ENCODE measurements at regions of chrX and their contacts with region 1.

Region 1: GRCh38 chrX:135295238-135295943 is 13.9 kb upstream of the ETDC start:
- DNase-seq: peak in 2 of 5 donors; percentile 16 to 25
- H3K4me3 ChIP-seq: no peak overlapping the region
- H3K27ac ChIP-seq: no peak overlapping the region
- H3K4me1 ChIP-seq: no peaks in the 10 kb centered on the region
- H3K27me3 ChIP-seq: no peaks in the 10 kb centered on the region
- CTCF ChIP-seq: no peak
- EP300 ChIP-seq: no peak
- POLR2A ChIP-seq: no peak

Region 2: GRCh38 chrX:135327299-135327698 is 31.9 kb after region 1 on chrX:
- intact Hi-C with region 1: no loop called
- DNase-seq: no peak
- H3K4me3 ChIP-seq: no peak overlapping the region
- H3K27ac ChIP-seq: no peak overlapping the region
- H3K4me1 ChIP-seq: no peaks in the 10 kb centered on the region
- H3K27me3 ChIP-seq: no peaks in the 10 kb centered on the region
- CTCF ChIP-seq: no peak
- EP300 ChIP-seq: no peak
- POLR2A ChIP-seq: no peak

Region 3: DNA sequence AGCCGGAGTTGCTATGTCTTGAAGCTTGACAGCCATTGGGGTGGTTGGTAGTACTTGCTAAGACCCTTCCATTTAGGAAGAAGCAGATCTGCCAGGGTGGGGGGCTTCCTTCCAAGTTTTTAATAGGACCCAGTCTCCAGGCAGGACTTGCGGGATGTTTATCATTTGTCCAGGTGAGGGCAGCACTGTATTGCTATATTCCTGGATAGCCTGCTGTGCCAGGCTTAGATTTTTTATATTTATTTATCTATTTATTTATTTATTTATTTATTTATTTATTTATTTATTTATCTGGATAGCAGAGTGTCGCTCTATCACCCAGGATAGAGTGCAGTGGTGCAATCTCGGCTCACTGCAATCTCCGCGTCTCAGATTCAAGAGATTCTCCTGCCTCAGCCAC is 330.6 kb after region 1 on chrX:
- intact Hi-C with region 1: loop called in 1 of 4 experiments (anchors 5 kb)
- DNase-seq: no peak
- H3K4me3 ChIP-seq: no peak overlapping the region
- H3K27ac ChIP-seq: no peak overlapping the region
- H3K4me1 ChIP-seq: no peaks in the 10 kb centered on the region
- H3K27me3 ChIP-seq: no peaks in the 10 kb centered on the region
- CTCF ChIP-seq: no peak
- EP300 ChIP-seq: no peak
- POLR2A ChIP-seq: no peak

Region 4: DNA sequence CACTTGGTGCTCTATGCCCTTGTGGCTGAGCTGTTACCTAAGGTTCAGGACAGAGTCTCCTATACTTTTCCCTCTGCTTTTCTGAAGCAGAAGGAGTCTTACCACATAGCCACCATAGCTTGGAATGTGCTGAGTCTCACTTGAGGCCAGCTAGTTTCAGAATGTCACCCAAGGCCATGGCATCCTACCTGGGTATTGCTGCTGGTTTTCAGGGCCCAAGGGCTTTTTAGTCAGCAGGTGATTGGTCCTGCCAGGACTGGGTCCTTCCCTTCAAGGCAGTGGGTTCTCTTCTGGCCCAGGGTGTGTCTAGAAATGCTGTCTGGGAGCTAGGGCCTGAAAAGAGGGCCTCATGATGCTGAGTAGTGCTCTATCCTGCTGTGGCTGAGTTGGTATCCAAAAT is 1269.3 kb after region 1 on chrX:
- intact Hi-C with region 1: no loop called
- DNase-seq: no peak
- H3K4me3 ChIP-seq: no peak overlapping the region
- H3K27ac ChIP-seq: no peak overlapping the region
- H3K4me1 ChIP-seq: no peaks in the 10 kb centered on the region
- H3K27me3 ChIP-seq: no peaks in the 10 kb centered on the region
- CTCF ChIP-seq: no peak
- EP300 ChIP-seq: no peak
- POLR2A ChIP-seq: no peak